IMR-90 (cell line): ENCODE measurements at regions of chr17 and their contacts with region 1.

Region 1: GRCh38 chr17:67441052-67441927 is 64.2 kb downstream of the PITPNC1 start:
- DNase-seq: peak; percentile 88
- ATAC-seq: peak; percentile 98
- H3K4me3 ChIP-seq: peak overlapping the region; percentile 17; the same call in 1 of the 2 replicates
- H3K27ac ChIP-seq: peak overlapping the region; percentile 7; the same call in 1 of the 2 replicates
- H3K4me1 ChIP-seq: peaks cover 3% of the 10 kb centered on the region; the same call in 1 of the 2 replicates
- H3K27me3 ChIP-seq: no peaks in the 10 kb centered on the region
- CTCF ChIP-seq: no peak
- POLR2A ChIP-seq: peak; percentile 80
- RAD21 ChIP-seq: no peak

Region 2: GRCh38 chr17:67262435-67263117 is 178.7 kb before region 1 on chr17:
- CTCF ChIA-PET with region 1: no interaction called
- POLR2A ChIA-PET with region 1: interaction called, 13 read pairs
- dilution Hi-C with region 1: no loop called
- in situ Hi-C with region 1: no loop called
- intact Hi-C with region 1: no loop called
- DNase-seq: no peak
- ATAC-seq: no peak
- H3K4me3 ChIP-seq: no peak overlapping the region
- H3K27ac ChIP-seq: no peak overlapping the region
- H3K4me1 ChIP-seq: peaks cover 5% of the 10 kb centered on the region; the same call in 1 of the 2 replicates
- H3K27me3 ChIP-seq: no peaks in the 10 kb centered on the region
- CTCF ChIP-seq: no peak
- POLR2A ChIP-seq: no peak
- RAD21 ChIP-seq: no peak